WTC11 (cell line): ENCODE measurements at regions of chr13 and their contacts with region 1.

Region 1: GRCh38 chr13:98598043-98598442 is 21.1 kb upstream of the STK24 start:
- DNase-seq: no peak
- ATAC-seq: peak; percentile 87
- H3K4me3 Mint-ChIP-seq: no peak overlapping the region
- H3K27ac Mint-ChIP-seq: no peak overlapping the region
- H3K4me1 Mint-ChIP-seq: peaks cover 5% of the 10 kb centered on the region
- H3K27me3 Mint-ChIP-seq: no peaks in the 10 kb centered on the region
- CTCF ChIP-seq: no peak

Region 2: GRCh38 chr13:98622931-98623331 is 24.9 kb after region 1 on chr13:
- CTCF ChIA-PET with region 1: interaction called, 12 read pairs
- POLR2A ChIA-PET with region 1: interaction called, 3 read pairs
- DNase-seq: no peak
- ATAC-seq: no peak
- H3K4me3 Mint-ChIP-seq: no peak overlapping the region
- H3K27ac Mint-ChIP-seq: no peak overlapping the region
- H3K4me1 Mint-ChIP-seq: no peaks in the 10 kb centered on the region
- H3K27me3 Mint-ChIP-seq: no peaks in the 10 kb centered on the region
- CTCF ChIP-seq: no peak

Region 3: DNA sequence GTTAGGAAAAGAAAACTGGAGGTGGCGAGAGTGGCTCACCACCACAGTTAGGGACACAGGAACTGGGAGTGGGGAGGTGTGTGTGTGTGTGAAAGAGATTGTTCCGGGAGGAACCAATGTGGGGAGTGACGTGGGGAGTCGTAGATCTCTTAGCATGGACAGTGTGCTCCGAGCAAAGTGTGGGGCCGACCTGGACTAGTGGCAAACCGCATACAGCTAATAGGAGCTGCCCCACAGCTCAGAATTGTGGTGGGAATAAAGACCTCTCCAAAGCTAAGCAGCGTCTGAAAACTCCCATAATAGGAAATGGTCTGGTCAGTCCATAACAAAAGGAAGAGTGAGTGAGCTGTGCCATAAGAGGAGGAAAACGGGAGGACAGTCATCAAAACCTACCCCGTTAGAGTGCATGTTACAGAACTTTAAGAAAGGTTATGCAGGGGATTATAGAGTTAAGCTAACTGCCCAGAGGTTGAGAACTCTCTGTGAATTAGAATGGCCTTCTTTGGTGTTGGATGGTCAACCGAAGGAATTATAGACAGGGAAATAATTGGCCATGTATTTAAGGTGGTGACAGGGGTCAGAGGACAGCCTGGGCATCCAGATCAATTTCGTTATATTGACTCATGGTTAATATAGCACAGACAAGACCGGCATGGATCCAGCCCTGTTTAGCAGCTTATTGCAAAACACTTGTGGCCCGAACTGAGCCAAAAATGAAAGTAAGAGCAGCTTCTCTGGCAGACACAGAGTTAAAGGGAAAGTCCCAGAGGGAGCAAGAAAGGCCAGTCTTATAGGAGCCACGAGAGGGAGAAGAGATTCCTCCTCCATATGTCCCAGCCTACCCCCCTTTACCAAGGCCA is 163.3 kb after region 1 on chr13:
- CTCF ChIA-PET with region 1: no interaction called
- POLR2A ChIA-PET with region 1: no interaction called
- DNase-seq: no peak
- ATAC-seq: no peak
- H3K4me3 Mint-ChIP-seq: no peak overlapping the region
- H3K27ac Mint-ChIP-seq: no peak overlapping the region
- H3K4me1 Mint-ChIP-seq: peaks cover 14% of the 10 kb centered on the region
- H3K27me3 Mint-ChIP-seq: no peaks in the 10 kb centered on the region
- CTCF ChIP-seq: no peak

Region 4: GRCh38 chr13:98890186-98890585 is 292.1 kb after region 1 on chr13:
- CTCF ChIA-PET with region 1: no interaction called
- POLR2A ChIA-PET with region 1: no interaction called
- DNase-seq: no peak
- ATAC-seq: no peak
- H3K4me3 Mint-ChIP-seq: no peak overlapping the region
- H3K27ac Mint-ChIP-seq: no peak overlapping the region
- H3K4me1 Mint-ChIP-seq: peaks cover 55% of the 10 kb centered on the region
- H3K27me3 Mint-ChIP-seq: no peaks in the 10 kb centered on the region
- CTCF ChIP-seq: no peak